ENCODE measurements at regions of chr6 and their contacts with region 1.

Region 1: DNA sequence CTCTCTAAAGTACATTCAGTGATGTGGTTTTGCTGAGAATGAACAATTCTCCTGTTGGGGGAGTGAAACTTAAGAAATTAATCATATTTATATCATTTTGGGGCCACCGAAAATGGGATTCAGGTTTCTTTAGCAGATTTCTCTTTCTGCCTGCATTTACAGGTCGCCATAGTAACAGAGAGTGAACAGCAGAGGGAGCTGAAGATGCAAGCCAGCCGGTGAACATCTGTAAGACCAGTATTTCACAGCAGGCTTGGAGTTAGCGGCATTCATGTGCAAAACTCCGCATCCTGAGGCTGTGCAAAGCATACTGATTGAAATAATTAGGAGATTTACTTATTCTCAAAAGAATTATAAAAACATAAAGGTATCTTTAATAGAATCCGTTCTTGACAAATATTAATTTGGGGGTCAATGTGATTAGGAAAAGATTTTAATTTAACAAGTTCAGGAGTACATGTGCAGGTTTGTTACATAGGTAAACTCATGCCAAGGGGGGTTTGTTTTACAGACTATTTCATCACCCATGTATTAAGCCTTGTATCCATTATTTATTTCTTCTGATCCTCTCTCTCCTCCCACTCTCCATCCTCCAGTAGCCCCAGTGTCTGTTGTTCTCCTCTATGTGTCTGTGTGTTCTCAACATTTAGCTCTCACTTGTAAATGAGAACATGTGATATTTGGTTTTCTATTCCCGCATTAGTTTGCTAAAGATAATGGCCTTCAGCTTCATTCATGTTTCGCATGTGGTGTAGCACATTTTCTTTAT is 17.8 kb upstream of the HSF2 start:
- DNase-seq: peak; percentile 27 to 69 (median 47)
- H3K4me3 ChIP-seq: no peak overlapping the region
- H3K27ac ChIP-seq: no peak overlapping the region
- H3K4me1 ChIP-seq: no peaks in the 10 kb centered on the region
- H3K27me3 ChIP-seq: no peaks in the 10 kb centered on the region
- CTCF ChIP-seq: peak; percentile 41 to 70 (median 58)
- EP300 ChIP-seq: no peak
- POLR2A ChIP-seq: no peak

Region 2: DNA sequence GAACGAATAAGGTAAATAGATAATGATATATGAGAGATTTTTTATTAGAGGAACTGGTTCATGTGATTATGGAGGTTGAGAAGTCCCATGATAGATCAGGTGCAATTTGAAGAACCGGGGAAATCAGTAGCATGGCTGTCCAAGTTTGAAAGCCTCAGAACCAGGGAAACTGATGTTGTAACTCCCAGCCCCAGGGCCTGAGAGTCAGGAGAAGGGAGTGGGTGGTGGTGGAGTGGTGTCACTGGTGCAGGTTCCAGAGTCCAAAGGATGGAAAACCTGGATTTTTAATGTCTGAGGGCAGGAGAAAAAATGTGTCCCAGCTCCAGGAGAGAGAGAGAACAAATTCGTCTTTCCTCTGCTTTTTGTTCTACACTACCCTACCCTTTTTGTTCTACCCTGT is 404.1 kb before region 1 on chr6:
- intact Hi-C with region 1: no loop called
- DNase-seq: no peak
- H3K4me3 ChIP-seq: no peak overlapping the region
- H3K27ac ChIP-seq: no peak overlapping the region
- H3K4me1 ChIP-seq: no peaks in the 10 kb centered on the region
- H3K27me3 ChIP-seq: no peaks in the 10 kb centered on the region
- CTCF ChIP-seq: no peak
- EP300 ChIP-seq: no peak
- POLR2A ChIP-seq: no peak

Region 3: DNA sequence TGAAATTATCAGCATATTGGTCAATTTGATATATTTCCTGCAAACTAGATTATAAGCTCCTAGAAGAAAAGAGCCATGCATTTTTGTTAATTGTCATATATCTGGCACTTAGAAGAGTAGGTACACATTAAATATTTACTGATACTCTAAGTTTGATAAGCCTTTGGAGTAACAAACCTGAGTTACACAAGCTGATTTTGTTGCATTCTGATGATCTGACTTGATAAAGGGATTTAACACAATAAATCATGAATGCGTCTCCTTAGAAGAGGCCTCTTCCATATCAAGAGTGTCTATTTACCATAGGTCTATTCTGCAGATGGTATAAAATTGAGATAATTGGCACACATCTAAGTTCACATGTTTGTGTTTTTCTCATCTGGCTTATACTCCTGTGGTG is 138.5 kb after region 1 on chr6:
- intact Hi-C with region 1: loop called in 1 of 4 experiments (anchors 10 kb)
- DNase-seq: no peak
- H3K4me3 ChIP-seq: no peak overlapping the region
- H3K27ac ChIP-seq: no peak overlapping the region
- H3K4me1 ChIP-seq: no peaks in the 10 kb centered on the region
- H3K27me3 ChIP-seq: no peaks in the 10 kb centered on the region
- CTCF ChIP-seq: no peak
- EP300 ChIP-seq: no peak
- POLR2A ChIP-seq: no peak

Region 4: DNA sequence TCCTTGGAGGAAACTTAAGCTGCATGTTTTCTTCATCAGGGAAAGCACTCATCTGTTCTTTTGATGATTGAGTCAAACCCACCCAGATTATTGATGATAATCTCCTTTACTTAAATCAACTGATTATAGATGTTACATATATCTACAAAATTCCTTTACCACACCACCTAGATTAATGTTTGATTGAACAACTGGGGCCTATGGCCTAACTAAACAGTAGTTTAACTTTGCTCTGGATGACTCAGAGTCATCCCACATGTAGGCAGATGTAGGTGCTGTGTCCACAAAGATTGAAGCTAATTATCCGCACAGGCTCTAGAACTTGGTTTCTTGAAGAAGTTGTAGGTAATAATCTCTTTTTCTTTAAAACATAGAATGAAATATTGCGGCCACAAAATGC is 270.8 kb after region 1 on chr6:
- intact Hi-C with region 1: no loop called
- DNase-seq: no peak
- H3K4me3 ChIP-seq: no peak overlapping the region
- H3K27ac ChIP-seq: no peak overlapping the region
- H3K4me1 ChIP-seq: no peaks in the 10 kb centered on the region
- H3K27me3 ChIP-seq: no peaks in the 10 kb centered on the region
- CTCF ChIP-seq: no peak
- EP300 ChIP-seq: no peak
- POLR2A ChIP-seq: no peak

Measured in ovary (tissue), 10 donors.